Endothelial cell of umbilical vein (primary cell): ENCODE measurements at regions of chr14 and their contacts with region 1.

Region 1: GRCh38 chr14:72516936-72517700 is 376.8 kb downstream of the DPF3 start:
- DNase-seq: peak; percentile 83
- H3K4me3 ChIP-seq: no peak overlapping the region
- H3K27ac ChIP-seq: no peak overlapping the region
- H3K4me1 ChIP-seq: peaks cover 6% of the 10 kb centered on the region
- H3K27me3 ChIP-seq: peaks cover 2 to 3% of the 10 kb centered on the region in 2 experiments
- CTCF ChIP-seq: peak; percentile 84 to 88
- POLR2A ChIP-seq: no peak

Region 2: DNA sequence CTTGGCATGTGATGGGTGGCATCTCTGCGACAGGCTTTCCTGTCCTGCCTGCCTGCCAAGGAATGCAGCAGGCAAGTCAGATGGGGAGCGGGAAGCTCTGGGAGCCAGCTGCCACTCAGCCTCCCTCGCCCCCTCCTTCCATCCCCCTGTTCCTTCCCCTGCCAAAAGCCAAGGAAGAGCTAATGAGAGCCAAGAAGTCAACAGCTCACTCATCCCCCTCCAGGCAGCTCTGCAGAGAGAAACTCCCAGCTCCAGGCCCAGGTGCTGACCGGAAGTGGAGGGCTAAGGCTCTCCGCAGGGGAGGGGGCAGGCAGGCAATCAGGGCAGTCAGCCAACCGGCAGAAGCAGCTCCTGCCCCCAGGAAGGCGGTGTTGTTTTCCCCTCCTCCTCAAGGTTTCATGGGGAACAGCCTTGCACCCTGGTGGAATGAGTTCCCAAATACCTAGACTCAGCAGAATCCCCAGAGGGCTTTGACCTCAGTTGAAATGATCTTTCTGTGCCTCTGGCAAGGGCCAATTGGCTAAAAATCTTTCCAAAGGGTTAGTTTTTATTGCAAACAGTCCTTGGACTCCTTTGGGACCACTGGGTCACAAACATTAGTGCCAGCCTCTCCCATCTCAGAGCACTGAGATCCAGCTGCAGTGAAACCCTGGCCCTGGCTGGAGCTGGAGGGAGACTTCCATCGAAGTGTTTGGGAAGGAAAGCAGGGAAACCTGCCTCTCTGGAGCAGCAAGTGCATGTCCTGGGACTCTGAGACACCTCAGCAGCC is 27.7 kb after region 1 on chr14:
- CTCF ChIA-PET with region 1: interaction called, 13 read pairs
- POLR2A ChIA-PET with region 1: no interaction called
- dilution Hi-C with region 1: no loop called
- intact Hi-C with region 1: no loop called
- DNase-seq: no peak
- H3K4me3 ChIP-seq: no peak overlapping the region
- H3K27ac ChIP-seq: no peak overlapping the region
- H3K4me1 ChIP-seq: no peaks in the 10 kb centered on the region
- H3K27me3 ChIP-seq: no peaks in the 10 kb centered on the region
- CTCF ChIP-seq: no peak
- POLR2A ChIP-seq: no peak

Region 3: DNA sequence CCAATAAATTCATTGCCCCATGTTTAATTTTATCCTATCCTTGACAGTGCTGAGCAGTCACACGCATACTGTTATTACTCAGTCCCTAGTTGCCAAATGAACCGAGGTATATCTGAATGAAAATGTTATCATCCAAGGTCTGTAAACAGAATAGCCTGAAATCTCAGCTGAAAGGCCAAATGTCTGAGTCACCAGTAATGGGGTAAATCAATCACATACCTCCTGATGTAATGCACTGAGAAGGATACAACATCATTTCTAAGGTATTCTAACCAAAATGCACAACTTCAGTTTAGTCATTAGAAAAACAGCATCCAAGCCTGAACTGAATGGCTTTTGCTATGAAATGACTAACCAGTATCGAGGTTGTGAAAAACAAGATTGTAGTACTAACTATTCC is 148.1 kb after region 1 on chr14:
- CTCF ChIA-PET with region 1: interaction called, 9 read pairs
- POLR2A ChIA-PET with region 1: interaction called, 6 read pairs
- dilution Hi-C with region 1: no loop called
- intact Hi-C with region 1: loop called (anchors 1 kb)
- DNase-seq: peak; percentile 97
- H3K4me3 ChIP-seq: peak overlapping the region in 1 of 3 experiments; percentile 52
- H3K27ac ChIP-seq: peak overlapping the region; percentile 97
- H3K4me1 ChIP-seq: peaks cover 46% of the 10 kb centered on the region
- H3K27me3 ChIP-seq: no peaks in the 10 kb centered on the region
- CTCF ChIP-seq: no peak
- POLR2A ChIP-seq: peak; percentile 15

Region 4: GRCh38 chr14:72781476-72782181 is 264.5 kb after region 1 on chr14:
- CTCF ChIA-PET with region 1: interaction called, 8 read pairs
- POLR2A ChIA-PET with region 1: no interaction called
- dilution Hi-C with region 1: no loop called
- intact Hi-C with region 1: loop called (anchors 5 kb)
- DNase-seq: peak; percentile 59
- H3K4me3 ChIP-seq: no peak overlapping the region
- H3K27ac ChIP-seq: peak overlapping the region; percentile 60
- H3K4me1 ChIP-seq: peaks cover 4% of the 10 kb centered on the region
- H3K27me3 ChIP-seq: no peaks in the 10 kb centered on the region
- CTCF ChIP-seq: no peak
- POLR2A ChIP-seq: no peak

Region 5: DNA sequence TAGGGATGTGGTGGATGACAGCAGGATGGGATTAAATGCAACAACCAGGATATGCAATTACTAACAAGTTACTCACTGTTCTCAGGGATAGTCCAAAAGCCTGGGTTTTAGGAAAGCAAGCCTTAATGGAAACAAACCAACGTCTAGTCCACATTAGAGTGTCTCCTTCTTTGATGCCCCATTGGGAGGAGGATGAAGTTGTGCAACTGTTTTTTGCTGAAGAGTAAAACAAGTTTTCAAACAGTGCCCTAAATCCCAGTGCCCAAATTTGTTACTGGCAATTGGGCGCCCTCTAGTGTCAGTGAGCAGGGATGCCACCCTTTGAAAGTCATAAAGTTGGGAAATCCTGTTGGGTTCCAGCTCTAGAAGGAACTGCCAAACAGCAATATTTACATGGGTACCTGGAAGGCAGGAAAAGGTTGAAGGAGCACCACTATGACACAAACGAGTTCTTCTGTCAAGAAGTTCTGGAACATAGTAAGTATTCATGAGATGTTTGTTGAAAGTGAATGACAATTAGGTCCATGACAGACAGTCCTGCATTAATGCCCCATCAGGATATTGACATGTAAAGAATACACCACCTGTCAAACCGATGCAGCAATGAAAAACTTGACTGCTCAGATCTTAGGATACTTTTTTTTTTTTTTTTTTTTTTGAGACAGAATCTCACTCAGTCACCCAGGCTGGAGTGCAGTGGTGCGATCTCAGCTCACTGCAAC is 387.9 kb after region 1 on chr14:
- CTCF ChIA-PET with region 1: interaction called, 377 read pairs
- POLR2A ChIA-PET with region 1: interaction called, 3 read pairs
- dilution Hi-C with region 1: no loop called
- intact Hi-C with region 1: loop called (anchors 1 kb)
- DNase-seq: peak; percentile 68
- H3K4me3 ChIP-seq: no peak overlapping the region
- H3K27ac ChIP-seq: no peak overlapping the region
- H3K4me1 ChIP-seq: no peaks in the 10 kb centered on the region
- H3K27me3 ChIP-seq: no peaks in the 10 kb centered on the region
- CTCF ChIP-seq: peak; percentile 78 to 93
- POLR2A ChIP-seq: no peak

Region 6: DNA sequence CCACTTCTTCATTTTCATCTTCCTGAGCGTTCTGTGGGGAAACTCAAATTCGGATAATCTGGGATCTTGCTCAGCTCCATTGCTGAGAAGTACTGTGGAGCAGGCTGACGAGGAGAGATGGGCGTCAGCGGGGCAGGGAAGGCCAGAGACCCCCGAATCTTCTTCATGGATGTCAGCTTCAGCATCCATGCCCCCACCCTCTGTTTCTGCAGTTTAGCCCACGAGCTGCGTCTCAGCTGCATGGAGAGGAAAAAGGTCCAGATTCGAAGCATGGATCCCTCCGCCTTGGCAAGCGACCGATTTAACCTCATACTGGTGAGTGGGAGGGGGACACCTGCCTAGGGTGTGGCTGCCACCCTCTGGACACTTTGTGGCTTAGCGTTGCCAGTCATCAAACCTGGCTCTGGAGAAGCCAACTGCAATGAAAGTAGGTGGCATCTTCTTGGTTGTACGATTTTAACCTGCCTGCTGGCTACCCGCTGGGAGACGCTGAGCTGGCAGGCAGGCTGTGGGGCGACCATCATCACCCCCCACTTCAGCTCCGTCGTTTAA is 425.7 kb after region 1 on chr14:
- CTCF ChIA-PET with region 1: interaction called, 751 read pairs
- POLR2A ChIA-PET with region 1: no interaction called
- dilution Hi-C with region 1: no loop called
- intact Hi-C with region 1: loop called (anchors 1 kb)
- DNase-seq: no peak
- H3K4me3 ChIP-seq: no peak overlapping the region
- H3K27ac ChIP-seq: no peak overlapping the region
- H3K4me1 ChIP-seq: no peaks in the 10 kb centered on the region
- H3K27me3 ChIP-seq: no peaks in the 10 kb centered on the region
- CTCF ChIP-seq: no peak
- POLR2A ChIP-seq: no peak